HCT116 (cell line): ENCODE measurements at regions of chr9 and their contacts with region 1.

Region 1: GRCh38 chr9:129028192-129028957 is at the start of gene SH3GLB2:
- DNase-seq: peak; percentile 83
- ATAC-seq: peak; percentile 89
- H3K4me3 ChIP-seq: peak within 1 kb of the TSS; percentile 89 to 96
- H3K27ac ChIP-seq: peak within 1 kb of the TSS; percentile 80
- H3K4me1 ChIP-seq: peaks cover 27 to 42% of the 10 kb centered on the region in 2 experiments; a peak in 3 of 4 replicates
- H3K27me3 ChIP-seq: no peaks in the 10 kb centered on the region
- CTCF ChIP-seq: peak in 2 of 3 experiments; percentile 70 to 89; a peak in 4 of 6 replicates
- POLR2A ChIP-seq: no peak
- RAD21 ChIP-seq: no peak
- total RNA-seq, gene SH3GLB2: 87.9 TPM

Region 2: GRCh38 chr9:129013674-129014504 is 14.5 kb before region 1 on chr9:
- CTCF ChIA-PET with region 1: no interaction called
- POLR2A ChIA-PET with region 1: no interaction called
- RAD21 ChIA-PET with region 1: no interaction called
- intact Hi-C with region 1: no loop called
- DNase-seq: no peak
- ATAC-seq: no peak
- H3K4me3 ChIP-seq: no peak overlapping the region
- H3K27ac ChIP-seq: no peak overlapping the region
- H3K4me1 ChIP-seq: no peaks in the 10 kb centered on the region
- H3K27me3 ChIP-seq: no peaks in the 10 kb centered on the region
- CTCF ChIP-seq: no peak
- POLR2A ChIP-seq: no peak
- RAD21 ChIP-seq: no peak

Region 3: GRCh38 chr9:129080602-129081387 is 52.4 kb after region 1 on chr9 and contains the start of gene DOLPP1:
- CTCF ChIA-PET with region 1: interaction called, 11 read pairs
- POLR2A ChIA-PET with region 1: interaction called, 4 read pairs
- RAD21 ChIA-PET with region 1: no interaction called
- intact Hi-C with region 1: loop called (anchors 2 kb)
- DNase-seq: peak; percentile 96
- ATAC-seq: peak; percentile 96
- H3K4me3 ChIP-seq: peak within 1 kb of the TSS; percentile 93 to 95
- H3K27ac ChIP-seq: peak within 1 kb of the TSS; percentile 69
- H3K4me1 ChIP-seq: peaks cover 11 to 17% of the 10 kb centered on the region in 2 experiments
- H3K27me3 ChIP-seq: no peaks in the 10 kb centered on the region
- CTCF ChIP-seq: no peak
- POLR2A ChIP-seq: peak; percentile 29
- RAD21 ChIP-seq: no peak
- total RNA-seq, gene DOLPP1: 17.4 TPM